Activated CD4-positive, alpha-beta memory T cell treated with anti-CD3 and anti-CD28 coated beads, Interleukin-2, amount 10 ng/mL, durations not matched to agents 7 days and 5 days (primary cell): ENCODE measurements at regions of chr3 and their contacts with region 1.

Region 1: DNA sequence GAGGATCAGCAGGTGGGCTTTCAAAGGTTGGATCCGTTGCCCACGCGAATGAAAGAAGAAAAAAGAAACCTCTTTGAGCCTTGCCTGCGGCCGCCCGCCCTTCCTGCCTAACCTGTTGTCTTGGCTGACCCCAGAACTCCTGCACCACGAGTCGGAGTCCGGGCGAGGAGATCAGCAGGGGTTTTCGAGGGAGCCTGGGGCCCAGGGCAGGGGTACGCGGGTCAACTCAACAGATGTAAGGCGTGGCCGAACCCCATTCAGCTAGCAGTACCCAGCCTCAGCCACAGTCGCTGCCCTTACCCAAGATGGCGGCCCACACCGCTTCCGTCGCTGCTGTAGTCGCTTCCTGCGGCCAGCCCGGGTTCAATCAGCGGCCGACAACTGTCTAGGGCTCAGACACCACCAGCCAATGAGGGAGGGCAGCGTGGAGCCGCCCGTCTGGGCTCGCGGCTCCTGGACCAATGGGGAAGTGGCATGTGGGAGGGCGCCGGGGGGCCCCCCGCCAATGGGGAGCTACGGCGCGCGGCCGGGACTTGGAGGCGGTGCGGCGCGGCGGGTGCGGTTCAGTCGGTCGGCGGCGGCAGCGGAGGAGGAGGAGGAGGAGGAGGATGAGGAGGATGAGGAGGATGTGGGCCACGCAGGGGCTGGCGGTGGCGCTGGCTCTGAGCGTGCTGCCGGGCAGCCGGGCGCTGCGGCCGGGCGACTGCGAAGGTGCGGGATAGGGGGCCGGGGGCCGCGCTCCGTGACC is at the start of gene MANF:
- DNase-seq: peak; percentile 99
- H3K4me3 Mint-ChIP-seq: peak within 1 kb of the TSS; percentile 98
- H3K27ac Mint-ChIP-seq: peak within 1 kb of the TSS; percentile 95
- H3K4me1 Mint-ChIP-seq: peaks cover 51% of the 10 kb centered on the region
- H3K27me3 Mint-ChIP-seq: no peaks in the 10 kb centered on the region
- total RNA-seq, gene MANF: 143 to 149 TPM

Region 2: DNA sequence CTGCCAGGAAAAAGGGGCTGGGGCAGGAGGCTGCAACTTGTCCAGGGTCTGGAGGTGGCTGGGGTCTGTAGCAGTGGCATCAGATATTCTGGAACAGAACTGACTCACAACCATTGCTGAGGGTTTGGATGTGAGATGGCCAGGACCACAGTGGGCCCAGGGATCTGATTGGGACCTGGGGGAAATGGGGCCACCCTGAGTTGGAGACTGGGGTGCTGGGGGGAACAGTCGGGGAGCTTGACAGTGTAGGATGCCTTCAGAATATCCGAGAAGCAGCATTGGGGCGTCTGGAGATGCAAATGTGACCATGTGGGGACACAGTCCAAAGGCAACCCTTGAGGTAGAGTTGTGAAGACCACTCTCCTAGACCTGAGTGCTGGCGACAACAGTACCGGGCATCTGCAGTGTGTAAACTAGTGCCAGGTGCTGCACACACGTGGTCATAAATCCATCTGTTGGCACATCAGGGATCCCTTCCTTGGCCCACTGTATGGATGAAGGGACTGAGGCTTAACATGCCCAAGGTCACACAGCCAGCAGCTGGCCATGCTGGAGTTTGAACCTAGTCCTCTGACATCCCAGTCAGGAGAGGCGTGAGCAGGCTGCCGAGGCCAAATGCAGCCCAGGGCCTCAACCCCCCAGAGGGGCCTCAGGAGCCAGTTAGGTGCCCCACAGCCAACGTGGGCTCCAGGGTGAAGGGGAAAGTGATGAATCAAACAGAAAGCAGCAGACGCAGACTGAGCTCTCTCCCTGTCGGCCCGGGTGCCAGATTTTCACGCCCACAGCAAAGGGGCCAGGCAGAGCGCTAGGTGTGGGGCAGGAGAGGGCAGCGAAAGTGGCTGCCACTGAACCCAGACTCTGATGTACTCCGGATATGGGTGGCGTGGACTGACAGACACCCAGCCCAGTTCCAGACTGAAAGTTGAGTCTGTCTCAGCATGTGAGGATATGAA is 796.8 kb before region 1 on chr3:
- CTCF ChIA-PET with region 1: no interaction called
- POLR2A ChIA-PET with region 1: interaction called, 12 read pairs
- DNase-seq: peak; percentile 81
- H3K4me3 Mint-ChIP-seq: peak overlapping the region; percentile 6
- H3K27ac Mint-ChIP-seq: peak overlapping the region; percentile 96
- H3K4me1 Mint-ChIP-seq: peaks cover 78% of the 10 kb centered on the region
- H3K27me3 Mint-ChIP-seq: no peaks in the 10 kb centered on the region

Region 3: DNA sequence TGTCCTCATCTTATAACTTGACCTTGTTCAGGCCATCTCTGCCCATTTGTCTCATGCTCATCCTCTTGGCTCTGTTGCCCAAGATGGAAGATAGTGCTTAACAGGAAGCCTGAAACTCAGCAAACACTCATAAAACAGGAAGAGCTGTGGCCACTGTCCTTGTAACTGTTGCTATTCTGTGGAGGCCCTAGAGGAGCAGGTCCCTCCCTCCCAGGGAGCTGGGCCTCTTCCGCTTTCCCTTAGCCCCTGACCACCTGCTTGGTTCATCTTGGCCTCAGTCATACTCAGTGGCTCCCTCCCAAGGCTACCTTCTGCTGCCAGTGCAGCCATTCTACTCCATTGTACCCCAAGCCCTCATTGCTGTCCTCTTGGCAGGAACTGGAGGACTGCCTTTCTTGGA is 764.5 kb before region 1 on chr3:
- CTCF ChIA-PET with region 1: interaction called, 15 read pairs
- POLR2A ChIA-PET with region 1: interaction called, 21 read pairs
- DNase-seq: peak; percentile 33
- H3K4me3 Mint-ChIP-seq: peak overlapping the region; percentile 77
- H3K27ac Mint-ChIP-seq: peak overlapping the region; percentile 90
- H3K4me1 Mint-ChIP-seq: peaks cover 79% of the 10 kb centered on the region
- H3K27me3 Mint-ChIP-seq: no peaks in the 10 kb centered on the region

Region 4: DNA sequence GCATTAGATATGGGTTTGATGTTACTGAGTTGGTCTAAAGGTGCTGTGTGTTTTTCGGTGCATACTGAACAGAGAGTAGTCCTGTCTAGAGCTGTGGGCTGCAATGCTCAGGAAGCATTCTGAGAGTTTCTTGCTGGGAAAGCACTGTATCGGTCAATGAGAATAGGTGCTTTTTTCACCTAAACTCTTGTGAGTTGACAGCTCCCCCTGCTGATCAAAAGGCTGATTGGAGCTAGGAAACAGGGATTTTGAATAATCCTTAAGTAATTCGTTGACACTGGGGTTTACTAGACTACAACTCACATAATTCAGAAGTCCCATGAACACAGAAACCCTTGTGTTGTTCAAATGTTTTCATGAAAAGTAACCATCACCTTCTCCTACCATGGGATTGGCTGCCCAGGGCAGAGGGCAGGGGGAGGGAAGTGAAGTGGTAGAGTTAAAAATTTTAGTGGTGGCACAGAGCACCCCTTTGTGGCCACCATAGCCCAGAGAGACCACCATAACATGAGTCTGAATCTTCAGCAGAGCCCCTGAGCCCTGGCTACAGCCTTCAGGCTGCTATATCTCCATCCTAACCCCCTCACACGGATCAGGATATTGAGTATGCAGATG is 12.8 kb before region 1 on chr3:
- CTCF ChIA-PET with region 1: interaction called, 13 read pairs
- POLR2A ChIA-PET with region 1: interaction called, 6 read pairs
- DNase-seq: peak; percentile 61
- H3K4me3 Mint-ChIP-seq: no peak overlapping the region
- H3K27ac Mint-ChIP-seq: no peak overlapping the region
- H3K4me1 Mint-ChIP-seq: no peaks in the 10 kb centered on the region
- H3K27me3 Mint-ChIP-seq: peaks cover 3% of the 10 kb centered on the region

Region 5: GRCh38 chr3:51670823-51671733 is 286.2 kb after region 1 on chr3 and contains the start of gene TEX264:
- CTCF ChIA-PET with region 1: interaction called, 9 read pairs
- POLR2A ChIA-PET with region 1: interaction called, 29 read pairs
- DNase-seq: peak; percentile 95
- H3K4me3 Mint-ChIP-seq: peak within 1 kb of the TSS; percentile 93
- H3K27ac Mint-ChIP-seq: peak within 1 kb of the TSS; percentile 87
- H3K4me1 Mint-ChIP-seq: peaks cover 66% of the 10 kb centered on the region
- H3K27me3 Mint-ChIP-seq: no peaks in the 10 kb centered on the region
- total RNA-seq, gene TEX264: 103 to 108 TPM

Region 6: DNA sequence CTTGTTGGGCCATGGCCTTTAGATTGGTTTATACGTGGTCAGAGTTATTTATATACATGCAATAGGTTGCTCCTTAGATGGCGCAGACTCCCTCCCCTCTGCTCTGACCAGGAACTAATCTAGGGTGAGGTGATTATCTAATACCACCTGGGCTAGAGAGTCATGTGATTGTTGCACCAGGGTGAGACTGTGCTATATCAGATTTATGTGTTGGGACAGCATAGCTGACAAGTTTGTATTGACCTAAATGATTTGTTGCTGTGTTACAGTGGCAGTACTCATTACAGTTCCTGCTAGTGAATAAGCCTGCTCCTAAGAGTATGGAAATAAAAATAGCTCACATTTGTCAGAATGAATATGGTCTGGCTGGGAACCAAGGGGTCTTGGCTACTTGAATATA is 401.4 kb after region 1 on chr3:
- CTCF ChIA-PET with region 1: no interaction called
- POLR2A ChIA-PET with region 1: no interaction called
- DNase-seq: no peak
- H3K4me3 Mint-ChIP-seq: no peak overlapping the region
- H3K27ac Mint-ChIP-seq: no peak overlapping the region
- H3K4me1 Mint-ChIP-seq: peaks cover 28% of the 10 kb centered on the region
- H3K27me3 Mint-ChIP-seq: peaks cover 36% of the 10 kb centered on the region